Panc1 (cell line): ENCODE measurements at regions of chr17 and their contacts with region 1.

Region 1: DNA sequence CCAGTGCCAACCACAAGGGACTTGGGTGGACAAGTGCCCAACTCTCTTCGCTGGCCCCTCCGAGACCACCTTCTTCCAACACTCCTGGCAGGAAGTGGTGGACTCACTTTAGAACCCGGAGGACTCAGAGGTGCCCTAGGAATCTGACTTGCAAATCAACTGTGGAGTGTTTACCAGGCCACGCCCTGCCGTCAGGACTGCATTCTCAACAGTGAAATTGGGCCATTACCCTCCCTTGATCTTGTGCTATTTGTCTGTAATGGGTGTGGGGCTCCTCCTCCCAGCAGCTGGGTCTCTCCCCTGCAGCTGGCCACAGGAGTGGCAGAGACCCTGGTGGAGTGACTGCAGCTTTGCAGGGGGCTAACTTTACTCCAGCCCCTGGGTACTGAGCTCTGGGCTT is 212.2 kb upstream of the RPL38 start:
- DNase-seq: no peak
- ATAC-seq: no peak
- H3K4me3 ChIP-seq: no peak overlapping the region
- H3K27ac ChIP-seq: no peak overlapping the region
- H3K4me1 ChIP-seq: no peaks in the 10 kb centered on the region
- H3K27me3 ChIP-seq: peaks cover 4% of the 10 kb centered on the region; the same call in 1 of the 2 replicates
- CTCF ChIP-seq: no peak

Region 2: GRCh38 chr17:73132085-73132492 is 859.2 kb before region 1 on chr17:
- CTCF ChIA-PET with region 1: no interaction called
- POLR2A ChIA-PET with region 1: no interaction called
- in situ Hi-C with region 1: no loop called
- intact Hi-C with region 1: no loop called
- DNase-seq: no peak
- ATAC-seq: no peak
- H3K4me3 ChIP-seq: no peak overlapping the region
- H3K27ac ChIP-seq: no peak overlapping the region
- H3K4me1 ChIP-seq: no peaks in the 10 kb centered on the region
- H3K27me3 ChIP-seq: no peaks in the 10 kb centered on the region
- CTCF ChIP-seq: no peak

Region 3: DNA sequence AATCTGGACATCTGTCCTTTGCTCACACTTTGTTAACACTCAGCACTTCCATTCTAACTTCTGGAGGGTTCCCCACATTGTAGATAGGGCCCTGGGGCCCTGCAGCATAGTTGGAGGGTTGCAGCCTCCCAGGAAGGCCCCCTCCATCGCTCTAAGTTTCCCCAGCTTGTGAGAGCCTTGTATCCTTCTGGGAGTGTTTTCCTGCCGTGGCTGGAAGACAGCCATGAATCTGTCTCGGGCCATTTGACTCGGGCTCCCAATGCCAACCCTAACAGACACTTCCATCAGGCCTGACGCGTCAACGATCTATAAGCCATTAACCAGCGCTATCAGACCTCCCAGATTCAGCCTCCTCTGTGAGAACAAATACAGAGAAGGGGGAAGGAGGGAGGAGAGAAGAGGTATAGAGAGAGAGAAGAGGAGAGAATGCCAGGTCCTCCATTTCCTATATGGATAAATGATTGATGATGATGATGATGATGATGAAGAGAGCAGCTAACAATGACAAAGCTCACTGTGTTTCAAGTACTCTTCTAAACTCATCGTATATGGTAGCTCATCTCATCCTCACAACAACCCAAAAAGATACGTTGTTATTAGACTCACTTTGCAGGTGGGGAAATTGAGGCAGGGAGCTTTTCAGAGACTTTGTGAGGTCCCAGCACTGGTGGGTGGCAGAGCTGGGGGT is 51.3 kb before region 1 on chr17:
- CTCF ChIA-PET with region 1: no interaction called
- POLR2A ChIA-PET with region 1: interaction called, 13 read pairs
- in situ Hi-C with region 1: no loop called
- intact Hi-C with region 1: no loop called
- DNase-seq: no peak
- ATAC-seq: no peak
- H3K4me3 ChIP-seq: no peak overlapping the region
- H3K27ac ChIP-seq: no peak overlapping the region
- H3K4me1 ChIP-seq: no peaks in the 10 kb centered on the region
- H3K27me3 ChIP-seq: peaks cover 4% of the 10 kb centered on the region; the same call in 1 of the 2 replicates
- CTCF ChIP-seq: no peak

Region 4: GRCh38 chr17:74042744-74043486 is 51.7 kb after region 1 on chr17:
- CTCF ChIA-PET with region 1: no interaction called
- POLR2A ChIA-PET with region 1: no interaction called
- in situ Hi-C with region 1: no loop called
- intact Hi-C with region 1: loop called (anchors 5 kb)
- DNase-seq: peak; percentile 78
- ATAC-seq: peak; percentile 96
- H3K4me3 ChIP-seq: no peak overlapping the region
- H3K27ac ChIP-seq: no peak overlapping the region
- H3K4me1 ChIP-seq: peaks cover 2% of the 10 kb centered on the region; the same call in 1 of the 2 replicates
- H3K27me3 ChIP-seq: no peaks in the 10 kb centered on the region
- CTCF ChIP-seq: no peak